Motor neuron (in vitro differentiated cells): ENCODE measurements at regions of chr11 and their contacts with region 1.

Region 1: DNA sequence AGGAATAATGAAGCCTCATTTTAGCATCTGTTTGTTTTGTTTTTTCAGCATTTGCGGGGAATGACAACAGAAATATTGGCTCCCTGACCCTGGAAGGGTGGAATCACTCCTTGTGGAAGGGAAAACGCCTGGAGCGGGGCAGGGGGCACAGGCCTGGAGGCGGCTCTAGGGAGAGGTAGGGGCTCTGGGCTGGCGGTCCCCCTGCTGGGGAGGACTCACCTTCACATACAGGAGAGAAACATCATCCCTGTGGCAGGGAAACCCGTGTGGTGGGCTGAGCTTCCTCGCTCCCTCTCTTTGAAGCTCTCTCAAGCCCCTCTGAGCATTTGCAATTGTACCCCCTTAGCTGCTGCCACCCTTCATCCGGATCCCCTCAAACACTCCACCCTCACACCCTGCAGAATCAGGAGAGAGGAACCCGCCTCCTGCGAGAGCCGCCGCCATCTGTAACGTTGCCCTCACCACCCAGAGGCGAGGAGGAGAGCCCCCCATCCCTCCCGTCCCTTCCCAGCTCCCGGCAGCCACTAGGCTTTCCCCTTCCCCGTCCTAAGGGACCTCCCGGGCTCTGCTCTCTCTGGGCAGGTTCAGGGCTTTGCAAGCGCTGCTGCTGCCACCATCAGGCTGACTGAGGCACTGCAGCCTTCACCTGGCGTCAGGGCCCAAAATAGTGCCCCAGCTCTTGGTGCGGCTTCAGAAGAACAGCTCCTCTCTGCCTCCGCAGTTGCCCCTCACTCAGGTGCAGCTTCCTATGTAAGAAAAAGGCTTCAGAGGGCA is 10.4 kb downstream of the KIRREL3 start:
- ATAC-seq: peak; percentile 60 to 100 (median 98)
- H3K4me3 ChIP-seq: no peak overlapping the region
- H3K27ac ChIP-seq: no peak overlapping the region
- H3K4me1 ChIP-seq: peaks cover 13 to 18% of the 10 kb centered on the region in 2 donors

Region 2: DNA sequence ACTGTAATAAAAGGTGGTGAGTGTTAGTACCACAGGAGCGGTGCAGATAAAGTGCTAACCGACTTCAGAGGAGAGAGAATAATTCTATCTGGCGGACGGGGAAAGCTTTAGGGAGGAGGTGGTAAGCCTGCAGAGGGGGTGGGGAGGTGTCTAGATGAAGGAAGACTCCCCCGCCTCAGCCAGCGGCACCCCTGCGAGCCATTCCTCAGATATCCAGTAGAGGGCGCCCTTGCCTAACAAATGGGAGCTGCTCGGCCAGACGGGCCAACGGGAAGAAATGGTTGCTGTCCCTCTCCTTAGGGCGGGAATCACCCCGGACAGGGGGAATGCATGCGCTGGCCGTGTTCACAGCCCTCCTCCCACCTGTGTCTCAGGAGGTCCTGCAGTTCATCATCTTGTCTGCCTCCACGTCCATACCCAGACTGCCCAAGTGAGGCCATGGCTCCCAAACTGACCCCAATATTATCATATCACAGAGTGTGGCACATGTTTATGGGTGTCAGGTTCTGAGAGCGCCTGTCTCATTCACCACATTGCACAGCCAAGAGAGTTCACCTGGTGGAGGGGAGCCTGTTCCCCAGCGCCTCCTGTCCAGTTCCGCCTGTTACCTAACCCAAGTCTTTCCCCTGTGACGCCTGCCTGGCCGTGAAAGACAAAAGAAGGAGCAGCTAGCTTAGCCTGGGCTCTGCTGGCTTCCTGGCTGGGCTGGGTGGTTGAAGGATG is 549.2 kb before region 1 on chr11:
- in situ Hi-C with region 1: loop called in 2 of 9 experiments (anchors 25 kb)
- ATAC-seq: peak; percentile 78 to 95 (median 82)
- H3K4me3 ChIP-seq: no peak overlapping the region
- H3K27ac ChIP-seq: no peak overlapping the region
- H3K4me1 ChIP-seq: peaks cover 15 to 21% of the 10 kb centered on the region in 2 donors

Region 3: GRCh38 chr11:126607374-126607773 is 382.8 kb before region 1 on chr11:
- in situ Hi-C with region 1: loop called in 6 of 9 experiments (anchors 10 to 25 kb)
- ATAC-seq: peak; percentile 92 to 99 (median 94)
- H3K4me3 ChIP-seq: no peak overlapping the region
- H3K27ac ChIP-seq: no peak overlapping the region
- H3K4me1 ChIP-seq: peaks cover 29 to 31% of the 10 kb centered on the region in 2 donors

Region 4: DNA sequence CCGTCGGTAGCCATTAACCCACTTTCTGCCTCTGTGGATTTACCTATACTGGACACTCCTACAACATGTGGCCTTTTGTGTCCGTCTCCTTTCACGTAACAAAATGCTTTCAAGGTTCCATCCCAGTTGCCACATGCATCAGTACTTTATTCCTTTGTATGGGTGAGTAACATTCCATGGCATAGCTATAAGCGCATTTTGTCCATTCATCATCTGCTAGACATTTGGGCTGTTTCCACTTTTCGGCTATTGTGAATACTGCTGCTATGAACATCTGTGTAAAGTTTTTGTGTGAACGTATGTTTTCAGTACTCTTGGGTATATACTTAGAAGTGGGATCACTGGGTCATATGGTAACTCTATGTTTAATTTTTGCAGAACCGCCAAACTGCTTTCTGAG is 377.5 kb before region 1 on chr11:
- in situ Hi-C with region 1: loop called in 6 of 9 experiments (anchors 10 to 25 kb)
- ATAC-seq: peak in 2 of 8 experiments; percentile 17 to 43
- H3K4me3 ChIP-seq: no peak overlapping the region
- H3K27ac ChIP-seq: no peak overlapping the region
- H3K4me1 ChIP-seq: peaks cover 33 to 44% of the 10 kb centered on the region in 2 donors

Region 5: DNA sequence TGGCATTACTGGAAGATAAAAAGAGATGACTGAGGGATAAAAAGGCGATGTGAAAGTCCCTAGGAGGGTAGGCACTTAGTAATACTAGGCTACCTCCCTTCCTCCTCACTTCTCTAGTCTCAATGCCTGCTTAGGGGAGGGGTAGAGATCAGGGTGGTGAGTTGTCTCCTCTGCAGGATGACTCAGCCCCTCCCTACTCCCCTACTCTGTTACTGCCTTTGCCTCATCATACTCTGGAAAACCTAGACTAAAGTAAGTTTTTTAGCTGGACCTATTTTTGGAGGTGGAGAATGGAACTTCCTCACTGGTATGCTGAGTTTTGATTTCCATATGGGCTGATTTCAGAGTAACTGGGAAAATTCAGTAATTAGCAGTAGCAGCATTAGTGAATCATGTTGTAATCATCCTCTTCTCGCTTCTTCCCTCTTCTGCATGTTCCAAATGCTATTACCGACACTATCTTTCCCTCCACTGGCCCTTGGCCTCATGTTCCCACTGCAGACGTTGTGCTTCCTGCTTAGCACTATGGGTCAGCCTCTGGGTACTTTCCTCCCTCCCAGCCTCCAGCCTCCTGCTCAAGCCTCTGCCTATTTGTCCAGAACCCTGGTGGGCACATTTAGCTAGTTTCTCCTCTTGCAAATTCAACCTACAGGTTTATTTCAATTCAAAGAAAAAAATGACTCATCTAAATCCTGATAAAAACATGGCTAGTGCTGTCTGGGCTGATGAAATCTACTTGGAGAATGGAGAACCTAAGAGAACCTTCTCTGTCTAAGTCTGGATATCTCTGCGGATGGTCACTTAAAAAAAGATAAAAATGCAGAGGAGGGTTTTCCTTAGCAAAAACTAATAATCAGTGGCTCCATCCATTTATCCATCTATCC is 353.0 kb before region 1 on chr11:
- in situ Hi-C with region 1: no loop called
- ATAC-seq: peak in 7 of 8 experiments; percentile 80 to 94 (median 86)
- H3K4me3 ChIP-seq: no peak overlapping the region
- H3K27ac ChIP-seq: no peak overlapping the region
- H3K4me1 ChIP-seq: peaks cover 17 to 49% of the 10 kb centered on the region in 2 donors

Region 6: GRCh38 chr11:126716456-126717083 is 273.6 kb before region 1 on chr11:
- in situ Hi-C with region 1: loop called in 6 of 9 experiments (anchors 10 to 25 kb)
- ATAC-seq: peak; percentile 23 to 80 (median 52)
- H3K4me3 ChIP-seq: no peak overlapping the region
- H3K27ac ChIP-seq: no peak overlapping the region
- H3K4me1 ChIP-seq: peaks cover 8 to 11% of the 10 kb centered on the region in 2 donors